ENCODE measurements at regions of chr10 and their contacts with region 1.

Region 1: DNA sequence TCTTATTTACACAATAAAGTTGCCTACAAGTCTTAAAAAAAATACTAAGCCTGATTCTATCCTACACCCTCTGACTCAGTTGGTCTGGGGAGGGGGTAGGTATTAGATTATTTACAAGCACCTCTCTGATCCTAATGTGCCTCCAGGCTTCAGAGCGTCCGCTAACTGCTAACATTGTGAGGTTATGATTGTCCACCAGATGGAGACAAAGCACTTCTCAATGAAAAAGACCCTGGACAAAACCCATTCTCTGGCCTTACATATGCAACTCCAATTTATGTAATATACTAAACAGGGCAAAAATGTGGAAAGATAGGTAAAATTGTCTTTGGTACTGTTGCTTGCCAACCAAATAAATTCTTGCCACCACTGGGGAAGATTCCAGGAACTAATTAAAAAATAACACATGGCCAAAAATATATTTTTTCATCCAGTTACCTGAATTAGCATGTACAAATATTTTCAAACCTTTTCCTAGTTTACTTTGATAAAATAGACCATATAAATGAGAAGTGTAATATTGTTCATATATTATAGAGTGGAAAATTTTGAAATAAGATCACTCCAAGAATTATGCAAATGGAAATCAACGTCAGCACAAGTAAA is 92.4 kb downstream of the KIF20B start:
- DNase-seq: peak in 1 of 2 donors; percentile 39
- ATAC-seq: peak in 7 of 8 donors; percentile 28 to 73 (median 63)
- H3K4me3 ChIP-seq: no peak overlapping the region
- H3K27ac ChIP-seq: no peak overlapping the region
- H3K4me1 ChIP-seq: no peaks in the 10 kb centered on the region
- H3K27me3 ChIP-seq: peaks cover 0 to 9% (median 0%) of the 10 kb centered on the region in 7 donors
- CTCF ChIP-seq: peak; percentile 53 to 87 (median 80)

Region 2: DNA sequence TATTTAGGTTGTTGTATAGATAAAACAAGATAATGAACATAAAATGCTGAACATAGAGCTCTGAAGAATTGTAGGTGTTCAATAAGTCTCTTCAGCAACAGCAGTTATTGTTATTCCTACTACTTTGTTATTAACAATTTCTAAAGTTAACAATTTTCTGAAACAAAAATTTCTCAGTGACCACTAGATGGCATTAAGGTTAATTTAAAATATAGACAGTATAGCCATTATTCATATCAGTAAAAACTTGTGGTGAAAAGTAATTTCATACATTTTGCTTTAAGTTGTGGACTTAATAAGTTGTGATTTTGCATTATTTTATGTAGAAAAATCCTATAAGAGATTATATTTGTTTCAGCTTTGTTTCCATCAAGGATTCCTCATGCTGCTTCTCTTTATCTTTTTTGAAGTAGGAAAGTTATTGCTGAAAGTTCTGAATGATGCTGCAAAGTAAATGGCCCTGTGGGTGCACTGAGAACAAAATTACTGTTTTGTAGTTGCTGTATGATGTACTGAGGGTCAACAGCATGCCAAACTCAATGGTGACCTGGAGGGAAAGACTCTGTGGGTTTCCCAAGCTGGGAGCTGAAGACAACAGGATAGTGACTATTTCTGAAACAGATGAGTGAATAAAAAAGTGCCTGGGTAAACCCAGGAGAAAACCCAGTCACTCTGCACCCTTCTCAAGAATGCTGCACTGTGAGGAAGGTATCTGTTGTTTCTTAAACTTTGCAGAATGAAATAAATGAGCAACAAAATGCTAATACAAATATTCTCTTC is 161.2 kb after region 1 on chr10:
- intact Hi-C with region 1: loop called in 1 of 10 experiments (anchors 10 kb)
- DNase-seq: no peak
- ATAC-seq: no peak
- H3K4me3 ChIP-seq: no peak overlapping the region
- H3K27ac ChIP-seq: no peak overlapping the region
- H3K4me1 ChIP-seq: no peaks in the 10 kb centered on the region
- H3K27me3 ChIP-seq: no peaks in the 10 kb centered on the region
- CTCF ChIP-seq: peak in 7 of 9 donors; percentile 24 to 52 (median 37)

Region 3: GRCh38 chr10:90148116-90148855 is 354.5 kb after region 1 on chr10:
- intact Hi-C with region 1: loop called in 1 of 10 experiments (anchors 10 kb)
- DNase-seq: no peak
- ATAC-seq: no peak
- H3K4me3 ChIP-seq: no peak overlapping the region
- H3K27ac ChIP-seq: no peak overlapping the region
- H3K4me1 ChIP-seq: no peaks in the 10 kb centered on the region
- H3K27me3 ChIP-seq: no peaks in the 10 kb centered on the region
- CTCF ChIP-seq: peak in 7 of 9 donors; percentile 30 to 55 (median 42)

Region 4: DNA sequence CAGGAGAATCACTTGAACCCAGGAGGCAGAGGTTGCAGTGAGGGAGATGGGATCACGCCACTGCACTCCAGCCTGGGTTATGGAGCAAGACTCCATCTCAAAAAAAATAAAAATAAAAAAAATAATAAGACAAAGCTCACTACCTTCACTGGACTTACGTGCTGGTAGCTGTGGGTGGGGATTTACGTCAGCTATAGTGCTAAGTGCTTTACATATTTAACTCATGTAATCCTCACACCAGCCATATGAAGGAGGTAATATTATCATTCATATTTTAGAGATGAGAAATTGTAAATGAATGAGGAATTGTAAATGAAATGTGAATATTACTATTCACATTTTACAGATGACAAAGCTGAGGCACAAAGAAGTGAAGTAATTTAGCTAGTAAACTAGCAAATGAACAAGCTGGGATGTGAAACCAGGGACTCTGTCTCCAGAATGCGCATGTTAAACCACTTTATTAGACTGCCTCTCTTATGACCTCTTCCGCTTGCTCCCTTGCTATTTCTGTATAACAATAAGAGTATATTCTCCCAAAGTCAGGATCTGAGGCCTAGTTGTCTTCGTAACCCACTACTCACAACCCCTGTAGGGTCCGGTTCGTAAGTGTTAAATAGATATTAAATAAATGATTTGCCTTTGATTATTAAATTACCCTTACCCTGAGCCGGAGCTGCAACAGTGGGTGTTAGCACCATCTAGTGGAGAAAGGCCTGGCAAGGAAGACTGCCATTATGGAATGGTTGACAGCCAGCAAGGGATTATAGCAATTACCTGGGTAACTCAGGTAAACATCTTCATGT is 993.8 kb after region 1 on chr10:
- intact Hi-C with region 1: loop called in 9 of 10 experiments (anchors 2 to 10 kb)
- DNase-seq: peak in 1 of 2 donors; percentile 21
- ATAC-seq: peak in 4 of 8 donors; percentile 44 to 52 (median 44)
- H3K4me3 ChIP-seq: no peak overlapping the region
- H3K27ac ChIP-seq: no peak overlapping the region
- H3K4me1 ChIP-seq: no peaks in the 10 kb centered on the region
- H3K27me3 ChIP-seq: peaks cover 0 to 11% (median 0%) of the 10 kb centered on the region in 7 donors
- CTCF ChIP-seq: peak; percentile 28 to 83 (median 70)

Region 5: GRCh38 chr10:90857635-90858460 is 1064.1 kb after region 1 on chr10 and contains the start of gene HTR7:
- intact Hi-C with region 1: loop called in 5 of 10 experiments (anchors 5 to 10 kb)
- DNase-seq: peak; percentile 30 to 65
- ATAC-seq: peak; percentile 68 to 92 (median 80)
- H3K4me3 ChIP-seq: peak within 1 kb of the TSS in 9 of 10 donors; percentile 35 to 67 (median 57)
- H3K27ac ChIP-seq: peak within 1 kb of the TSS in 5 of 10 donors; percentile 31 to 74 (median 35)
- H3K4me1 ChIP-seq: peaks cover 0 to 27% (median 7%) of the 10 kb centered on the region in 9 donors
- H3K27me3 ChIP-seq: peaks cover 0 to 63% (median 49%) of the 10 kb centered on the region in 7 donors
- CTCF ChIP-seq: peak; percentile 38 to 72 (median 60)
- total RNA-seq, gene HTR7: 0.09 to 0.28 (median 0.16) TPM in 8 of 10 donors, not detected in the others

Region 6: DNA sequence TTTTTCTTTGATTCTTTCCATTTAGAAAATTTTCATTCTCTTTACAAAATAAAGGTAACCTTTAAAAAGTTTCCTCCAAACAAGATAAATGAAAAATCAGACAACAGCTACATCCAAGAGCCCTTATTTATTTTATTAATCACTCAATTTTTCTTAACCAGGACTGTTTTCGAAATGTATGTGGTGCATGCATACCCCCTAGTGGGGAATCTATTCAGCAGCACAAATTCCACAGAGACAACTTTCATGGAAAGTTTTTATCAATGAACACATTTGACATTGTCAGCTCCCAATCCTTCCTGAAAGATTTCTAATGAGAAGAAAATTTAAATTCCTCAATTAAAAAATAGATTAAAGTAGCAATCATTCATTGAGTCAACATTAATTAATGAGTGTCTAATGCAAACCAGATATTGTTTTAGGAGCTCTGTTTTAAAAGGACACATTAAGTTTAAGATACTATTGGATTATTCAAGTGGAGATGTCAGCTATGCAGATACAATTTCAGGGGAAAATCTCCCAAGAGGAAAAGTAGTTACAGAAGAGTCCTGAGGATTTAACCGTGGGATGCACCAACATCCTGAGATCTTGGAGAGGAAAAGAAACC is 1069.3 kb after region 1 on chr10:
- intact Hi-C with region 1: loop called in 6 of 10 experiments (anchors 2 to 10 kb)
- DNase-seq: no peak
- ATAC-seq: no peak
- H3K4me3 ChIP-seq: no peak overlapping the region
- H3K27ac ChIP-seq: no peak overlapping the region
- H3K4me1 ChIP-seq: peaks cover 0 to 17% (median 0%) of the 10 kb centered on the region in 9 donors
- H3K27me3 ChIP-seq: peaks cover 0 to 53% (median 22%) of the 10 kb centered on the region in 7 donors
- CTCF ChIP-seq: peak; percentile 21 to 71 (median 55)

Region 7: DNA sequence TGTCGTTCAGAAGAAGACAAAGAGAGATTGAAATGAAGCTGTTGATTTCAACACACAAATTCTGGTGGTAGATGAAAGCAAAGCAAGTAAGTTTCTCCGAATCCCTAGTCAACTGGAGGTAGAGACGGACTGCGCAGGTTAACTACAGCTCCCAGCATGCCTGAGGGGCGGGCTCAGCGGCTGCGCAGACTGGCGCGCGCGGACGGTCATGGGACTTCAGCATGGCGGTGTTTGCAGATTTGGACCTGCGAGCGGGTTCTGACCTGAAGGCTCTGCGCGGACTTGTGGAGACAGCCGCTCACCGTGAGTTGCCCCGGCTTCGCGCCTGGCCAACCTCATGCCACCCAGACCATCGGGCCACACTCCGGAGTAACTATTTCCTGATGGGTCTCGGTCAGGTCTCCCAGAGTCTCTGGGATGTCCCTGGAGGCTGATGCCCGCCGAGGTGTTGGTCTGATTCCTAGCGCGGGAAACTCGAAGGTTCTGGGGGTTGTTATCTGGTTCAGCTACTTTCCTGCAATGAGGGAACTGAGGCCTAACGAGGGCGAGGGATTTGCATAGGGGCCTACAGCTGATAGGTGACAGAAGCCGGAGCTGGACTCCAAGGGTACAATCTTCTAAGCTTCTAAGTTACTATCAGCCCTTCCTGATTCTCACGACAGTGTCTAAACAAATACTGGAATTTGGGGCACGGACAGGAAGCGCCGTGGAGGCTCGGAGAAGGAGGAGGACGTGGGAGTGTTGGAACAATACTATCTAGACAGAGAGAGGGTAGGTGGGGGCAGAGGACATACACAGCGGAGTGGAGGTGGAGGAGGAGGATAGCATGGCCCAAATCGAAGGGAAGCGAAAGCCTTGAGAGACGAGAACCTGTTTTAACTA is 1078.3 kb after region 1 on chr10 and contains the start of gene RPP30:
- intact Hi-C with region 1: loop called in 4 of 10 experiments (anchors 2 to 10 kb)
- DNase-seq: peak; percentile 83
- ATAC-seq: peak; percentile 98 to 99 (median 99)
- H3K4me3 ChIP-seq: peak within 1 kb of the TSS; percentile 47 to 92 (median 74)
- H3K27ac ChIP-seq: peak within 1 kb of the TSS in 9 of 10 donors; percentile 13 to 79 (median 62)
- H3K4me1 ChIP-seq: peaks cover 0 to 31% (median 18%) of the 10 kb centered on the region in 9 donors
- H3K27me3 ChIP-seq: peaks cover 0 to 8% (median 3%) of the 10 kb centered on the region in 7 donors
- CTCF ChIP-seq: no peak
- total RNA-seq, gene RPP30: 27.9 to 40.4 (median 33.3) TPM